Body of pancreas (tissue), 4 donors: ENCODE measurements at regions of chr11 and their contacts with region 1.

Region 1: DNA sequence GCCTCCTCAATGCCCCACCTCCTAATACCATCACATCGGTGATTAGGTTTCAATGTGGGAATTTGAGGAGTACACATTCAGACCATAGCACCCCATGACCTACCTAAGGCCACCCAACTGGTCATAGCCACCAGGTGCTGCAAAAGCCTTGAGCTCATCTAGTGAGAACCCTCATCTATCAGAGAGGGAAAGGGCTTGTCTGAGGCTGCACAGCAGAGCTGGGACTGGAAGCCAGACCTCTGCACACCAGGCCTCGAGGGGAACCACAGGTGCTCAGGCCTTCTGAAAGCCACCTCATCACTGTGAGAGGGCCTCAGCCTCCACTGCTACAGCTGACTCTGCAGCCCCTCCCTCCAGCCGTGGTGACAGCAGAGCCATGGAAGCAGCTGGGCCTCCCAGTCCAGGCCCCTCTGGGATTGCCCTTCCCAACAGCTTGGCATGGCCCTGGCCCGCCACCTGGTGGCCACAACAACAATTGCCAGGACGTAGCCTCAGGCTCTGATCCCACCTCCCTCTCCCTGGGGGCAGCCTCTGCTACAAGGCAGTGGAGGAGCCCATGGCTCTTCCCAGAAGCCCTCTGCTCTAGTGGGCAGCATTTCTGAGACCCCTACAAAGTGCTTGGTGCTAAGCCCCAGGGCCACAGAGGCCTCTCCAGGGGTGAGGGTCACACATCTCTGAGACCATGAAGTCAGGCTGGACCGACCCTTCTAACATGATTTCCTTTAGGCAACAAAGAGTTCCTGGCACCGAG is 41.0 kb upstream of the PRDM11 start:
- DNase-seq: peak; percentile 76 to 78 (median 78)
- ATAC-seq: peak; percentile 85
- H3K4me3 ChIP-seq: no peak overlapping the region
- H3K27ac ChIP-seq: no peak overlapping the region
- H3K4me1 ChIP-seq: no peaks in the 10 kb centered on the region
- H3K27me3 ChIP-seq: no peaks in the 10 kb centered on the region
- CTCF ChIP-seq: peak; percentile 85 to 94 (median 92)
- POLR2A ChIP-seq: no peak

Region 2: GRCh38 chr11:44899959-44900358 is 205.4 kb before region 1 on chr11:
- intact Hi-C with region 1: no loop called
- DNase-seq: no peak
- ATAC-seq: no peak
- H3K4me3 ChIP-seq: no peak overlapping the region
- H3K27ac ChIP-seq: no peak overlapping the region
- H3K4me1 ChIP-seq: no peaks in the 10 kb centered on the region
- H3K27me3 ChIP-seq: no peaks in the 10 kb centered on the region
- CTCF ChIP-seq: no peak
- POLR2A ChIP-seq: no peak

Region 3: GRCh38 chr11:44927174-44927661 is 178.2 kb before region 1 on chr11:
- intact Hi-C with region 1: loop called (anchors 5 kb)
- DNase-seq: peak; percentile 65 to 76 (median 74)
- ATAC-seq: peak; percentile 67
- H3K4me3 ChIP-seq: no peak overlapping the region
- H3K27ac ChIP-seq: no peak overlapping the region
- H3K4me1 ChIP-seq: no peaks in the 10 kb centered on the region
- H3K27me3 ChIP-seq: no peaks in the 10 kb centered on the region
- CTCF ChIP-seq: peak; percentile 76 to 92 (median 86)
- POLR2A ChIP-seq: no peak

Region 4: DNA sequence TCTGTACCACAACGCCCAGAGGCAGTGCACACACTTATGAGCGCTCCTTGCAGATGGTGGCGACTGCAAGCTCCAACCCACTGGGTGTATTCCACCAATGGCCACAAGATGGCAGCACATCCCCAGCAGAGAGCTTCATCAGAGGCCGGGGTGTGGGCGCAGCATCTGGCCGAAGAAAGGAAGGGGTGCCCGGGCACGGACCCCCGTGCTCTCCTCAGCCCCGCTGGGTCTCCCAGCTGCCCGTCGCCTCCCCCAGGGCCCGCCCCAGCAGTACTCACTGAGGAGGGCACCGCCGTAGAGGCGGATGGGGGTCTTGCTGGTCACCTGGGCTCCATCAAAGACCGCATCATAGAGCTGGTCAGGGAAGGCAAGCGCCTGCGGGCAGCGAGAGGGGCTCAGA is 168.9 kb before region 1 on chr11:
- intact Hi-C with region 1: loop called (anchors 2 kb)
- DNase-seq: peak; percentile 84 to 90 (median 86)
- ATAC-seq: peak; percentile 78
- H3K4me3 ChIP-seq: no peak overlapping the region
- H3K27ac ChIP-seq: no peak overlapping the region
- H3K4me1 ChIP-seq: no peaks in the 10 kb centered on the region
- H3K27me3 ChIP-seq: no peaks in the 10 kb centered on the region
- CTCF ChIP-seq: peak; percentile 93 to 97 (median 96)
- POLR2A ChIP-seq: no peak

Region 5: GRCh38 chr11:45294499-45294898 is 189.1 kb after region 1 on chr11:
- intact Hi-C with region 1: loop called (anchors 5 kb)
- DNase-seq: no peak
- ATAC-seq: no peak
- H3K4me3 ChIP-seq: no peak overlapping the region
- H3K27ac ChIP-seq: no peak overlapping the region
- H3K4me1 ChIP-seq: no peaks in the 10 kb centered on the region
- H3K27me3 ChIP-seq: no peaks in the 10 kb centered on the region
- CTCF ChIP-seq: no peak
- POLR2A ChIP-seq: no peak